ENCODE measurements at regions of chr9 and their contacts with region 1.

Region 1: DNA sequence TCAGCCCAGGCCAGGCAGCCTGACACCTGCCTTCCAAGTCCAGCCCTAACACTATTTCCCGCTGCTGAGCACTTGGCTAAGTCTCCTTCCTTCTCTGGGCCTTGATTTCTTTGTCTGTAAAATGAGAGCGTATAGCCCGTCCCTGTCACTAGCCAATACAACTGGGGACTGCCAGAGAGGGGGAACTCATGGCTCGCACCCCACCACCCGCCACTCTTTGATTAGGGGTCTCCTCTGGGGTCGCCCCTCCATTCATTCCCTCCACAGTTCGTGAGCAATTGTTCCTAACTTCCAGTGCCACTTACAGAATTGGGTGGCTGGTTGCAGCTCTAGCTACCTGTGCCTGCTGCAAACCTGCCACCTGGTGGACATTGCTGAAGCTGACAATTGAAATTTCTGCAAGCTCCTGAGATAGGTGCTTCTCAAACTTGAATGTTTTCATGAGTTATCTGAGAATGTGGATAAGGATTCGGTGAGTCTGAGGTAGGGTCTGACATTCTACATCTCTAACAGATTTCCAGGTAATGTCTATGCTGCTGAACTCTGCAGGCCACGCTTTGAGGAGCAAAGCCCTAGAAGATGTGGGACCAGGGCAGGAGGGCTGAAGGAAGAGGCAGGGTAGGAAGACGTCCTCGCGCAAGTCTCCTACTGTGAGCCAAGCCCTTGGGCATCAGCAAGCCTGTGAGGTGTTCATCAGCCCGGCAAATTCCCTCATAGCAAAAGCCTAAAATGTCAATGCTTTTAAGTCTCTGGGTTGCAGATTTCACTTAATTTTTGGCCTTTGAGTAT is 13.3 kb upstream of the RECK start:
- DNase-seq: peak; percentile 74
- ATAC-seq: peak; percentile 65

Region 2: GRCh38 chr9:34178520-34179212 is 1844.8 kb before region 1 on chr9 and contains the start of gene UBAP1:
- intact Hi-C with region 1: no loop called
- DNase-seq: peak; percentile 98
- ATAC-seq: peak; percentile 99
- total RNA-seq, gene UBAP1: 56.6 TPM

Region 3: DNA sequence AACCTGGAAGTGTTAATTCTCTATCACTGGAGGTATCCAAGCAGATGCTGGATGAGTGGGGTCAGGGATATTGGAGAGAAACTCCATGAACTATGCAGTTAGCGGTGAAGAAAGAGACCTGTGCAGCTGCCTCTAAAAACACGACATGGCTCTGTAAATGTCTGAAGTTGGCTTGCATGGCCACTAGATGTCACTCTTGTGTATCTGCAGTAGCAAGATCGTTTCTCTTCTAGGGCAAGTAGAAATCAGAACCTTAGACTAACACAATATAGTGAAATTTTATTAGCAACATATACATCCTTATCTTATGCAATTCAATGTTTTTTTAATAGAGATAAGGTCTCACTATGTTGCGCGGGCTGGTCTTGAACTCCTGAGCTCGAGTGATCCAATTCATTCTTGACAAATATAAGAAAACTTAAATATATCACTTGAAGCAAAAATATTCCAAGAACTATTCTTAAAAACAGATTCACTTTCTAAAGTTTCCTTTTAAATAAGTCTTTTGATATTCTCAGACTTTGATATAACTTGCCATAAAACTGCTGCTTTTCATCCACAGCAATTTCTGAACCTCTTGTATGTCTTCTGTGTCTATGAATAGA is 68.4 kb before region 1 on chr9:
- intact Hi-C with region 1: loop called (anchors 10 kb)
- DNase-seq: no peak
- ATAC-seq: peak; percentile 86